CD14-positive monocyte (primary cell): ENCODE measurements at regions of chr10 and their contacts with region 1.

Region 1: DNA sequence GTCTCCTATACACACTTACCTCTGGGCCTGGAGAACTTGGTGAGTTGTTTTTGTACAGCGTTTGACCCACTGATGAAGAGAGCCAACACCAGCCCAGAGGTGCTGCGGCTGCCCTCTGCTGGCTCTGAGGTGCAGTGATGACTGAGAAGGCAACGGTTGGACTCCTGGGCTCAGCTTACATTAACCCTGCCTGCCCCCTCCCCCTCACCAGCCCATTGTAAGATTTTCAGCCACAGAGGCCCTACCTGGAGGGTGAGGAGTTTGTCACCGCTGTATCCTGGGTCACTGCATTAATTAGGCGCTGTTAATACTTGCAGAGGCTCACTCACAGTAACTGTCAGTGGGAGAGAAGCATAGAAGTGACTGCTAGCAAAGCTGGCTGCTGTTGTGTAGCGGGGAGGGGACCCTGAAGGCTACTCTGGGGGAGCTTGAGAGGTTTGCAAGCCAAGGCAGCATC is 19.0 kb upstream of the ANKRD2 start:
- DNase-seq: peak; percentile 37 to 58 (median 49)
- H3K4me3 ChIP-seq: no peak overlapping the region
- H3K4me3 Mint-ChIP-seq: no peak overlapping the region
- H3K27ac ChIP-seq: no peak overlapping the region
- H3K27ac Mint-ChIP-seq: peak overlapping the region in 1 of 7 donors; percentile 45
- H3K4me1 ChIP-seq: no peaks in the 10 kb centered on the region
- H3K4me1 Mint-ChIP-seq: peaks cover 3% of the 10 kb centered on the region
- H3K27me3 ChIP-seq: no peaks in the 10 kb centered on the region
- H3K27me3 Mint-ChIP-seq: no peaks in the 10 kb centered on the region
- CTCF ChIP-seq: peak; percentile 79

Region 2: DNA sequence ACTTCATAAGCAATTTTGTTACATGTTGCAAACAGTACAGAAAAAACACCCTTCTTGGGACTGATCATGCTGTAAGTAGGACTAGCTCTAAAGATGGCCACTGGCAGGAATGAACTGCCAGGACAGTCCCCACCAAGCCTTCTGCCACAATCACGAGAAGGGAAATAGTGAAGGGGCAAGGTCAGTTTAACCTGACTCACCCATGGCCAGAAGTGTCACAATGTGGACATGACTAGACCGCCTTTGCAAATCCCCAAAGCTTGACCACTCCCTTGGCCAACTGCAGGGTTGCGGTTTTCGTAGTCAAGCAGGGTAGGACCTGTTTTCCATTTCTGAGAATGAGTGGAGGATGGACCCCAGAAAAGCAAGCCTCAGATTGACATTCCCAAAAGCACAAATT is 199.7 kb before region 1 on chr10:
- intact Hi-C with region 1: no loop called
- DNase-seq: peak; percentile 95 to 98 (median 97)
- H3K4me3 ChIP-seq: peak overlapping the region in 1 of 3 experiments; percentile 58
- H3K4me3 Mint-ChIP-seq: peak overlapping the region; percentile 63
- H3K27ac ChIP-seq: peak overlapping the region; percentile 80 to 93
- H3K27ac Mint-ChIP-seq: peak overlapping the region; percentile 95 to 98 (median 97)
- H3K4me1 ChIP-seq: peaks cover 64% of the 10 kb centered on the region in 2 donors
- H3K4me1 Mint-ChIP-seq: peaks cover 71% of the 10 kb centered on the region
- H3K27me3 ChIP-seq: no peaks in the 10 kb centered on the region
- H3K27me3 Mint-ChIP-seq: peaks cover 0 to 3% (median 0%) of the 10 kb centered on the region in 3 donors
- CTCF ChIP-seq: no peak

Region 3: GRCh38 chr10:97463363-97464132 is 90.1 kb before region 1 on chr10:
- intact Hi-C with region 1: loop called (anchors 2 to 5 kb)
- DNase-seq: peak; percentile 12 to 41 (median 33)
- H3K4me3 ChIP-seq: no peak overlapping the region
- H3K4me3 Mint-ChIP-seq: no peak overlapping the region
- H3K27ac ChIP-seq: peak overlapping the region in 1 of 2 donors; percentile 43
- H3K27ac Mint-ChIP-seq: peak overlapping the region in 4 of 7 donors; percentile 4 to 72 (median 36)
- H3K4me1 ChIP-seq: no peaks in the 10 kb centered on the region
- H3K4me1 Mint-ChIP-seq: no peaks in the 10 kb centered on the region
- H3K27me3 ChIP-seq: no peaks in the 10 kb centered on the region
- H3K27me3 Mint-ChIP-seq: peaks cover 0 to 2% (median 0%) of the 10 kb centered on the region in 3 donors
- CTCF ChIP-seq: peak; percentile 96

Region 4: DNA sequence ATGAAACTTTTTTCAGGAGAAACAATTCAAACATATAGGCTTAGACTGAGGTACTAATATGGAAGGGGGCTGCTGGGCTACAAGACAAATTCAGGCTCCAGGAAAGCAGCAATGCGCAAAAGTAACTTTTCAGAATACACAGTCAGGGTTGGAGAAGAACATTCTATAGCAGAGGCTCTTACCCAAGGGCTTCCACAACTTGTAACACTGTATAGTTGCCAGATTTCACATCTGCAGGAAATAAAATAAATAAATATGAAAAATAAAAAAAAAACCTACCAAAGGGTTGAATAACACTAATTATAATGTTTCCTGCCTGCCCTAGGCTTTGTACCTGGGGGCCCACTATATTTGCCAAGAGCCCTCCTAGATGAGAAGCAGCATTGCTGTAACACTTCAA is 69.7 kb before region 1 on chr10:
- intact Hi-C with region 1: no loop called
- DNase-seq: no peak
- H3K4me3 ChIP-seq: no peak overlapping the region
- H3K4me3 Mint-ChIP-seq: no peak overlapping the region
- H3K27ac ChIP-seq: no peak overlapping the region
- H3K27ac Mint-ChIP-seq: peak overlapping the region in 2 of 7 donors; percentile 57 to 68
- H3K4me1 ChIP-seq: no peaks in the 10 kb centered on the region
- H3K4me1 Mint-ChIP-seq: peaks cover 3% of the 10 kb centered on the region
- H3K27me3 ChIP-seq: no peaks in the 10 kb centered on the region
- H3K27me3 Mint-ChIP-seq: peaks cover 0 to 2% (median 0%) of the 10 kb centered on the region in 3 donors
- CTCF ChIP-seq: no peak

Region 5: DNA sequence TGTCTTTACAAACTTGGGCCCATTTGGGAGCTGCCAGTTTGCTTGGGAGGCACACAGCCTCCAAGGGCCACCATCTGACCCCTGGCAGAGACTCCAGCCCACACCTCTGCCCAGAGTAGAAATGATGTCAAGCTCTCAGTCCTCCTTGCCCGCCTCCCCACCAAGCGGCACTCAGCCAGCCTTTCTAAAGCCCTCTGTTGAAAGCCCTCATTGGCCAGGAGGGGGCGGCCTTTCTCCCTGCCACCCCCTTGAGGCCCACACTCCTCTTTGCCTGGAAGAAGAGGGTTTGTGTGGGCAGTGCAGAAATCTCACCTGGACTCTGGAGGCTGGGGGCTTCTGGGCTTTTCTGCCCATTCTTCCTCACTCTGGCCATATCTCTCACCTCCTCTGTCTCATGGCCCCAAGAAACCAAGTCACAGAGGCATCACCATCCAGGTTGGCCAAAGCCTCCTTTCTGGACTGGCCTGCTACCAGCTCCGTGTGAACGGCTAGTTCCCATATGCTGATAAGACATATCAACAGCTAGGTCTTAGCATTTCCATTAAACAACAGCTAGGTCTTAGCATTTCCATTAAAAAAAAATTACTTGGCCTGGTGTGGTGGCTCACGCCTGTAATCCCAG is 18.7 kb before region 1 on chr10:
- intact Hi-C with region 1: loop called in 1 of 2 experiments (anchors 1 kb)
- DNase-seq: peak; percentile 21 to 45 (median 42)
- H3K4me3 ChIP-seq: no peak overlapping the region
- H3K4me3 Mint-ChIP-seq: no peak overlapping the region
- H3K27ac ChIP-seq: no peak overlapping the region
- H3K27ac Mint-ChIP-seq: peak overlapping the region in 2 of 7 donors; percentile 6 to 37
- H3K4me1 ChIP-seq: no peaks in the 10 kb centered on the region
- H3K4me1 Mint-ChIP-seq: peaks cover 1% of the 10 kb centered on the region
- H3K27me3 ChIP-seq: no peaks in the 10 kb centered on the region
- H3K27me3 Mint-ChIP-seq: no peaks in the 10 kb centered on the region
- CTCF ChIP-seq: peak; percentile 70